CD4-positive, alpha-beta memory T cell (primary cell): ENCODE measurements at regions of chr9 and their contacts with region 1.

Region 1: DNA sequence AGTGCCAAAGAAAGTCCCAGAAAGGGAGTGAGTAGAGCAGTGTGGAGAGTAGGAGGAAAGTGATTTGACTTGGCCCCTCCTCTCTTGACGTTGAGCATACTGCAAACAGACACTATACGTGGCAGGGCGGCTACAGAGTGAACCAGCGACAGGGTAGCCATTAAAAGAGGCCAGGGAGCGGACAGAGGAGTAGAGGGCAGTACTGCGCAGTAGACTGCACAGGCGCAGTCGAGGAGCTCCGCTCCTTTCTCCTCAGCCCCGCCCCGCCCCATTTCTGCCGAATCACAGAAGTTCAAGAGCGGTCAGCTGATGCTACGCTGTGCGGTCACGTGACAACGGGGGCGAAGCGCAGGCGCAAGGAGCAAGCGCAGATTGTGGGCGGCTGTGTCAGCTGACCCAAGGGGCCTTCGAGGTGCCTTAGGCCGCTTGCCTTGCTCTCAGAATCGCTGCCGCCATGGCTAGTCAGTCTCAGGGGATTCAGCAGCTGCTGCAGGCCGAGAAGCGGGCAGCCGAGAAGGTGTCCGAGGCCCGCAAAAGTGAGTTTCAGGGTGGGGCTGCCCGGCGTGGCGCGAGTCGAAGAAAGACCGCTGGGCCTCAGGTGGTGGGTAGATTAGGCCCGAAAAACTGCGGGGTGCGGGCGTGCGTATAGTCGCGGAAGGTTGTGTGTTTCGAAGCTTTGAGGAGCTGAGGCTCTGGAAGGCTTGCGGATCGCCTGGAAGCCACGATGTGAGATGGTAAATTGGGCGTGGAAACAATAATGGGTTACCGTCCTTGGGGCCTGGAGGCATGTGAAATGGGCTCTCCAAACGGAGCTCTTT is at the start of gene ATP6V1G1:
- DNase-seq: peak; percentile 95 to 99 (median 97)
- H3K4me3 ChIP-seq: peak within 1 kb of the TSS; percentile 47 to 82
- H3K4me3 Mint-ChIP-seq: peak within 1 kb of the TSS; percentile 96 to 99 (median 99)
- H3K27ac ChIP-seq: peak within 1 kb of the TSS; percentile 93
- H3K27ac Mint-ChIP-seq: peak within 1 kb of the TSS; percentile 98 to 100 (median 99)
- H3K4me1 ChIP-seq: peaks cover 47% of the 10 kb centered on the region
- H3K4me1 Mint-ChIP-seq: peaks cover 35 to 56% (median 45%) of the 10 kb centered on the region in 4 donors
- H3K27me3 ChIP-seq: no peaks in the 10 kb centered on the region
- H3K27me3 Mint-ChIP-seq: no peaks in the 10 kb centered on the region
- total RNA-seq, gene ATP6V1G1: 121 TPM

Region 2: GRCh38 chr9:114385412-114386181 is 202.0 kb before region 1 on chr9:
- CTCF ChIA-PET with region 1: interaction called, 9 read pairs
- POLR2A ChIA-PET with region 1: interaction called, 33 read pairs
- intact Hi-C with region 1: loop called (anchors 10 kb)
- DNase-seq: peak; percentile 91 to 98 (median 93)
- H3K4me3 ChIP-seq: peak overlapping the region; percentile 78 to 99
- H3K4me3 Mint-ChIP-seq: peak overlapping the region; percentile 95 to 100 (median 97)
- H3K27ac ChIP-seq: peak overlapping the region; percentile 88
- H3K27ac Mint-ChIP-seq: peak overlapping the region; percentile 96 to 99 (median 97)
- H3K4me1 ChIP-seq: peaks cover 79% of the 10 kb centered on the region
- H3K4me1 Mint-ChIP-seq: peaks cover 44 to 91% (median 66%) of the 10 kb centered on the region in 4 donors
- H3K27me3 ChIP-seq: no peaks in the 10 kb centered on the region
- H3K27me3 Mint-ChIP-seq: no peaks in the 10 kb centered on the region

Region 3: DNA sequence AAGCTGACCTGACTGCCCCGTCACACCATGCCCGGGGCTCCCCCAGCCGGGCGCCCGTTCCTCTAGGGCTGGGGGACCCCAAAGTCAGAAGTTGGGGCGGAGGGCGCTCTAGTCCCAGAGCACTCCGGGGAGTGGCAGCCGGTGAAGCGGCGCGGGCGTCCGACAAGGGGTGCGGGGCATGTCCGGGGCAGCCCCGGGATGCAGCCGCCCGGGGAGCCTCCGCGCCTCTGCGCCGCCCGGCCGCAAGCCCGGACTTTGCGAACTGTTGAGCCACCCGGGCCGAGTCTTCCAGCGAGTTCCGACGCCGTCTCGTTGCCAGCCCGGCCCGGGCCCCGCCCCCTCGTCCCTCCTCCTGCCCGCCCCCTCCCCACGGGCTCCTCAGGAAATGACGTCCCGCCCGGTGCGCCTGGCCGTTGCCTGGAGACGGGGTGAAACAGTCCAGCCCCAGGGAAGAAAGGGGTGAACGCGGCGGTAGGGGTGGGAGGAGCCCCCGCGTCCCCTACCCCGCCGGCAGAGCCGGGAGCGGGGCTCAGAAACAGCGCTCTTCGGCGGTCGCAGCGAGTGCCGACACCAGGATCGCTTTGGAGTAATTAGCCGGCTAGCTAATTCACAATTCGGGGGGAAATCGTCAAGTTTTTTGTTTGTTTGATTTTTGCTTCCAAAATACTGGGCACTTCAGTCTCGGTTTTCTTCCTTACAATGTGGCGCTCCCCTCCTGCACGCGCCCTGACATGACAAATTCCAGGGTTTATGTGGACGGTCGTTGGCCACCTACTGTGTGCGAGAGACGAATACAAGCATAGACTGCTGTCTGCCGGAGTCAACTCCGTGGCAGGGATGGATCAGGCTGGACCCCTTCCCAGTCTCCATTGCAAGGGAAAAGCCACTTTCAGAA is 82.2 kb before region 1 on chr9 and contains the start of gene WHRN:
- CTCF ChIA-PET with region 1: interaction called, 12 read pairs
- POLR2A ChIA-PET with region 1: interaction called, 10 read pairs
- intact Hi-C with region 1: loop called (anchors 1 kb)
- DNase-seq: peak; percentile 91 to 95 (median 93)
- H3K4me3 ChIP-seq: peak within 1 kb of the TSS; percentile 62 to 63
- H3K4me3 Mint-ChIP-seq: peak within 1 kb of the TSS; percentile 83 to 90 (median 87)
- H3K27ac ChIP-seq: peak within 1 kb of the TSS; percentile 47
- H3K27ac Mint-ChIP-seq: peak within 1 kb of the TSS; percentile 89 to 97 (median 93)
- H3K4me1 ChIP-seq: peaks cover 22% of the 10 kb centered on the region
- H3K4me1 Mint-ChIP-seq: peaks cover 10 to 45% (median 32%) of the 10 kb centered on the region in 4 donors
- H3K27me3 ChIP-seq: peaks cover 4% of the 10 kb centered on the region
- H3K27me3 Mint-ChIP-seq: peaks cover 16 to 17% of the 10 kb centered on the region in 2 donors
- total RNA-seq, gene WHRN: 8.4 to 10.1 TPM

Region 4: DNA sequence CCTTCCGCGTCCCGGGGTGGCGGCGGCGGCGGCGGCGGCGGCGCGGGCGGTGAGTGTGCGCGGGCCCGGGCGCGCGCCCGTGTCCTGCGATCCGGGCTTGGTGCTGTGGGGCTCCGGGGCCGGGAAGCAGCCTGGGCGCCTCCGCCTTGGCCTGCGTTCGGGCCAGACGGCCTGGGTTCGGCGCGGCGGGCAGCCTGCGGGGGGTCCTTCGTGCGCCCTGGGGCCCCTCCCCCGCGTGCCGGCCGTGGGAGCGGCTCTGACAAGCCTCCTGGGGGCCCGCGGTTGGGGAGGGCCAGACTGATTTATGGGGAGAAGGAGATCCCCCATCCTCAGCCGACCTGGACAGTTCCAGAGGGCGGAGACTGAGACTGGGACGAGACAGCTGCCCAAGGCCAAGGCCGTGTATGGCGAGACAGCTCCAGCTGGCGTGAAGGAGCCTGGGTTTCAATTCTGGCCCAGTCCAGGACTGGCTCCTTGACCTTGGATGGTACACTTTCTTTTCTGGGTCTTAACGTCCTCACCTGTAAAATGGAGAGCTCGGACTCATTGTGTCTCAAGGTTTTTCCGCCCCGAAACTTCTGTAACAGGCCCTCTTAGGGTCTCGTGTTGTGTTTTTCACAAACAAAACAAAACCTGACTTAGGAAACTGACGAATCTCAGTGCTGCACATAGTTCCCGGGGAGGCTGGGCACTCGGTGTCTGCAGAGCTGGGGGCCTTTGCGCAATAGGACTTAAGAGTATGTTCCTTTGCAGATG is 24.1 kb after region 1 on chr9:
- CTCF ChIA-PET with region 1: interaction called, 75 read pairs
- POLR2A ChIA-PET with region 1: interaction called, 244 read pairs
- intact Hi-C with region 1: loop called (anchors 1 kb)
- DNase-seq: peak in 4 of 5 donors; percentile 18 to 65 (median 26)
- H3K4me3 ChIP-seq: peak overlapping the region; percentile 77 to 92
- H3K4me3 Mint-ChIP-seq: peak overlapping the region; percentile 86 to 96 (median 93)
- H3K27ac ChIP-seq: peak overlapping the region; percentile 72
- H3K27ac Mint-ChIP-seq: peak overlapping the region; percentile 79 to 97 (median 94)
- H3K4me1 ChIP-seq: peaks cover 41% of the 10 kb centered on the region
- H3K4me1 Mint-ChIP-seq: peaks cover 24 to 49% (median 39%) of the 10 kb centered on the region in 4 donors
- H3K27me3 ChIP-seq: no peaks in the 10 kb centered on the region
- H3K27me3 Mint-ChIP-seq: no peaks in the 10 kb centered on the region

Region 5: GRCh38 chr9:114629563-114630090 is 42.0 kb after region 1 on chr9:
- CTCF ChIA-PET with region 1: interaction called, 6 read pairs
- POLR2A ChIA-PET with region 1: interaction called, 5 read pairs
- intact Hi-C with region 1: loop called (anchors 5 kb)
- DNase-seq: no peak
- H3K4me3 ChIP-seq: no peak overlapping the region
- H3K4me3 Mint-ChIP-seq: no peak overlapping the region
- H3K27ac ChIP-seq: no peak overlapping the region
- H3K27ac Mint-ChIP-seq: peak overlapping the region in 3 of 7 donors; percentile 28 to 72 (median 53)
- H3K4me1 ChIP-seq: no peaks in the 10 kb centered on the region
- H3K4me1 Mint-ChIP-seq: no peaks in the 10 kb centered on the region
- H3K27me3 ChIP-seq: no peaks in the 10 kb centered on the region
- H3K27me3 Mint-ChIP-seq: no peaks in the 10 kb centered on the region